ENCODE measurements at regions of chr6 and their contacts with region 1.

Region 1: GRCh38 chr6:131156411-131156810 is 21.1 kb downstream of the AKAP7 start:
- DNase-seq: no peak
- CTCF ChIP-seq: no peak

Region 2: GRCh38 chr6:131167773-131168172 is 11.4 kb after region 1 on chr6:
- CTCF ChIA-PET with region 1: interaction called, 12 read pairs
- POLR2A ChIA-PET with region 1: no interaction called
- DNase-seq: no peak
- CTCF ChIP-seq: peak; percentile 18

Measured in GM10248 (cell line).